Esophagus muscularis mucosa (tissue), 4 donors: ENCODE measurements at regions of chrX and their contacts with region 1.

Region 1: GRCh38 chrX:65644621-65645270 is 22.7 kb upstream of the MSN start:
- DNase-seq: no peak
- H3K4me3 ChIP-seq: no peak overlapping the region
- H3K27ac ChIP-seq: peak overlapping the region; percentile 67 to 75 (median 71)
- H3K4me1 ChIP-seq: peaks cover 29 to 35% (median 32%) of the 10 kb centered on the region in 4 donors
- H3K27me3 ChIP-seq: no peaks in the 10 kb centered on the region
- CTCF ChIP-seq: no peak
- EP300 ChIP-seq: no peak
- POLR2A ChIP-seq: no peak

Region 2: DNA sequence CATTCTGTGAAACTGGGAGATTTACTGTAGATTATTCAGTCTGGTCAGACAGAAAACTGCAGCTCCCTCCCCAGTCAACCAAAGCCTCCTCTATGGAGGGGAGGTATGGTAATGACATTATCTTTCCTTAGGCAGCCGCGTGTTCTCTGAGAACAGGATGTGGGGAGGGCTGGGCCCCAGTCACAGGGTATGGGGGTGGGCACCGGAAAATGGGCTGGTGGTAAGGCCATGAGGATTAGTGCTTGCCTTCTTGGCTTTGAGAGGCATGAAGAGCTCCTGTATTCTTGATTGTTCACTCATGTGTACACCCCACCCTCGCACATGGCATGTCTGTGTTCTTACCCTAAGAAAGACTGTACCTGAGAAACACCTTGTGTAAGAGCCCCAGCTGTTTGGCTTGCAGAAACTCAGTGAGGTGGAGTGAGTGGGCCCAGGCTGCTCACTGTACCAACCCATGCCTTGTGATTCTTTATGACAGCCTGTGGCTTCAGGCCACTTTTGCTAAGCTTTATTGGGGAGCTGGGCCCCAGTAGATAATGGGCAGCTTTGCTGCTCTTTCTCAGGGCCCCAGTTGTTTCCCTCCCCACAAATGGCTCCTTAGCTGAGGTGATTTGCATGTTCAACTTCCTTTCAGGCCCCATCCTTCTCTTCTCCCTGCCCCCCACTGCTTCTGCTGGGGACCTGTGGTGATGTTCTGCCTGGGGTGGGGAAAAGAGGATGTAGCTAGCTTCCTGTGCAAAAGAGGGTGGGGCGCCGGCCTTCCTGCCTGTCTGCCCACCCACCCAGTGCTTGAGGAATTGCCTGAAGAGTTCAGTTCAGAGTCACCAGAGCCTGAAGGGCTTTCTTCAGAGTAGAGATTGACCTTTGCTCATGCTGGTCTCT is 53.4 kb after region 1 on chrX:
- intact Hi-C with region 1: loop called (anchors 2 kb)
- DNase-seq: no peak
- H3K4me3 ChIP-seq: no peak overlapping the region
- H3K27ac ChIP-seq: peak overlapping the region; percentile 64 to 74 (median 66)
- H3K4me1 ChIP-seq: peaks cover 72 to 96% (median 82%) of the 10 kb centered on the region in 4 donors
- H3K27me3 ChIP-seq: no peaks in the 10 kb centered on the region
- CTCF ChIP-seq: no peak
- EP300 ChIP-seq: no peak
- POLR2A ChIP-seq: no peak